GM10248 (cell line): ENCODE measurements at regions of chr12 and their contacts with region 1.

Region 1: DNA sequence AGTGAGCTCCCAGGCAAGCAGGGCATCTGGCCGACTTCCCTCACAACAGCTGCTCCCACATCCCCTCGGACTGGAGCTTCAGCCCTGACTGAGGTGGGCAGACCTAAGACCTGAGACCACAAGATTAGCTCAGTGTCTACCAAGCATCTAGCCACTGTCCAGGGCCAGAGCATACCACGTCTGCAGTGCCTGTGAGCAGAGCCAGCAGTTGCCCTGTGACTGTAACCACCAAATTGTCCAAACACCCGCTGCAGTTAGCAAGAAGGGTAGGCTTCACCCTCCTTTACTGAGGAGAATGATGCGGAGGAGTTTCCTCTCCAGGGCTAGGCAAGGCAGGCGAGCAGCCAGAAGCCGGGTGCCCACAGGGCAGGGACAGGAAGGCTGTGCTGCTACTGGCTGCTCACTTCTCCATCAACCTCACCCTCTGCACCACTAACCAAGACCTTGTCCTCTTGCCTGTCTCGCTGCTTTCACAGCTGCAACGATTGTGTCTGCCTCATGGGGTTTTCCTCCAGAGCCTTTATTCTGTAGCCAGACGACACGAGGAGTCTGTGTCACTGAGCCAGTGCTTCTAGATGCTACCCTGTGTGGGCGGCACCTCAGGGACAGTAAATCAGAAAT is 53.9 kb downstream of the ANAPC7 start:
- DNase-seq: peak; percentile 41
- CTCF ChIP-seq: no peak

Region 2: GRCh38 chr12:110338754-110339153 is 10.9 kb before region 1 on chr12:
- CTCF ChIA-PET with region 1: interaction called, 22 read pairs
- POLR2A ChIA-PET with region 1: no interaction called
- DNase-seq: peak; percentile 33
- CTCF ChIP-seq: no peak

Region 3: DNA sequence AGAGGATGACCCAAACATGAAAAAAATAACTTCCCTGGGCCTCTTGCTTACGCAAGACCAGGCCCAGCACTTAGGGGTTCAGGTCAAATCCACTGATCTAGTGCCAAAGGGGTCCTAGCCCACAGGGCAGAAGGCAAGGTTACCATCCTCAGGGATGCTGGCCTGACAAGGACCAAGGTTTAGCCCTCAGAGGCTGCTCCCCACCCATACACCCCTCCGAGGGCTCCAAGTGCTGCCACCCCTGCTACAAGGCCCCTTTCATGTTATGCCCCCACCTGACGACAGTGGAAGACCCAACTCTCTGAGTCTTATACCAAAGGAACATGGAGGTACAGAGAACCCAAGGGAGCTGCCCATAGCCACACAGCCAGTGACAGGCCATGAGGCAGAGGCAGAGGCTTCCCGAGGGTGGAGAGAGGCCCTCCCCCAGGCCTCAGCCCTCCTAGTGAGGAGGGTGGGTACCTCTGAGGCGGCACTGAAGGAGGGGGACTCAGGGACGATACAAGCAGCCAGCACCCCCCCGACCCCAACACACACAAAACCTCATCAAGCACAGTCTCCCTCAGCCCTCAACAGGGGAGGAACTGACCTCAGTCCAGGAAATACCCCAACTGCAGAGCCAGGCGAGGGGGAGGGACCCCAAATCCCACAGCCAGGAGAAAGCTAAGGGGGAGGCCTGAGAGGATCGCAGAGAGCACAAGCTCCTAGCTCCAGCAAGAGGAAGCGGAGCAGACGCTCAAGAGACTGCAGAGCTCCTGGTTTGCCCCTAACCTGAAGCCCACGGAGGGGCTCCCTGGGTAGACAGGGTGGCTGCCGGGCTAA is 16.9 kb after region 1 on chr12:
- CTCF ChIA-PET with region 1: interaction called, 10 read pairs
- POLR2A ChIA-PET with region 1: interaction called, 3 read pairs
- DNase-seq: no peak
- CTCF ChIP-seq: no peak